ENCODE measurements at regions of chr6 and their contacts with region 1.

Region 1: DNA sequence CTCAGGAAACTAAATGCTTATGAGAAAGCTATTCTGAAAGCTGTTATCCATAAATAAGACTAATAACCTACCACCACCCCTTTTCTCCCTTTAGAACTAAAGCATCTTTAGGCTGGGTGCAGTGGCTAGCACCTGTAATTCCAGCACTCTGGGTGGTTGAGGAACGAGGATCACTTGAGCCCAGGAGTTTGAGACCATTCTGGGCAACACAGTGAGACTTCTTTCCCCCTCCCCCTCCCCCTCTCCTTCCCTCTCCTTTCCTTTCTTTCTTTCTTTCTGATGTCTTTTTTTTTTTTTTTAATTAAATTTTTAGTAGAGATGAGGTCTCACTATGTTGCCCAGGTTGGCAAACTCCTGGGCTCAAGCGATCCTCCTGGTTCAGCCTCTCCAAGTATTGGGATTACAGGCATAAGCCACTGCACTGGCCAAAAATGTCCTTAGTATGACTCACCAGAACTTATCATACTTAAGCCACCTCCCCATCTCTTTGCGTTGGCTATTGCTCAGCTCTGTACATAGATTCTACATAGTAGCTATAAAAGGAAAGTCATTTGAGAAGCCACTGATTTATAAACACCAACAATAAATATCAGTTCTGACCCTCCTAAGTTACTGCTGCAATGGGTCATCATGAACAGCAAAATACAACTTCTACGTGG is 54.8 kb upstream of the SPDEF start:
- DNase-seq: peak; percentile 64
- H3K4me3 ChIP-seq: no peak overlapping the region
- H3K27ac ChIP-seq: no peak overlapping the region
- H3K4me1 ChIP-seq: peaks cover 3% of the 10 kb centered on the region
- H3K27me3 ChIP-seq: no peaks in the 10 kb centered on the region
- CTCF ChIP-seq: no peak

Region 2: GRCh38 chr6:34161857-34162515 is 449.0 kb before region 1 on chr6:
- CTCF ChIA-PET with region 1: no interaction called
- dilution Hi-C with region 1: no loop called
- in situ Hi-C with region 1: loop called in 1 of 2 experiments (anchors 25 kb)
- intact Hi-C with region 1: loop called (anchors 1 kb)
- DNase-seq: no peak
- H3K4me3 ChIP-seq: no peak overlapping the region
- H3K27ac ChIP-seq: no peak overlapping the region
- H3K4me1 ChIP-seq: no peaks in the 10 kb centered on the region
- H3K27me3 ChIP-seq: no peaks in the 10 kb centered on the region
- CTCF ChIP-seq: no peak

Region 3: DNA sequence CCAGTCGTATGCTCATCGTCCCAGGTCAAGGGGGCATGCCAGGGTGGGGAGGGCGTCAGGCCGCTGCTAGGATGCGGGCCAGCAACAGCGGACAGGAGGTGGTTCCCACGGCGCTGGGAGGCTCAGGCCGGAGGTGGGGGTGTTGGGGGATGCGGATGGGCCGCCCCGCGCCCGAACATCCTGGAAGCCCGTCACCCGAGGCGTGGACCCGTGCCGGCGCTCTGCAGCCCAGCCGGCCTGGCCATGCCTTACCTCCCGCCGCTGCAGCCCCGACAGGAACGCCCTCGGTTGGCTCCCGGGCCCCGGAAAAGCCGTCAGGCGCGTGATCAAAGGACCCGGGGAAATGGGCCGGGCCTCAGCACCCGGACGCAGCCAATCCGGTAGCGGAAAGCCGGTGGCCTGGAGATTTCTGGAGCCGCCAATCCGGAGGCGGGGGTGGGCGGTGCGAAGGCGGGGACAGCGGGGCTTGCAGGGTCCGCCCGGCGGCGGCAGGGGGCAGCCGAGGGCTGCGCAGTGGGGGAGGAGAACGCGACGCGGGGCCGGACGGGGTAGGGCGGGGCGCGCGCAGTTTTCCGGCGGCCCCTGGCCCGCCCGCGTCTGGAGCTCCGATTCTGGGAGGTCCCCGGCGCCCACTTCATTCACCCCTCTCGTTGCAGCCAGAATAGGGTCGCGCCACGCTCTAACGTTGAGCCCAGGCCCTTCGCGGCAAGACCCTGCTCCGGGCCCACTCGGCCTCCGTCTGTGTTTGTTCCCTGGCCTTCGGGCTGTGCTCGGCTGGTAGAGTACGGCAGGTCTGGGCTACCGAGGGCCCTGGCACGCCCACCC is 362.0 kb before region 1 on chr6 and contains the start of gene SMIM29:
- CTCF ChIA-PET with region 1: no interaction called
- dilution Hi-C with region 1: no loop called
- in situ Hi-C with region 1: no loop called
- intact Hi-C with region 1: loop called (anchors 1 kb)
- DNase-seq: peak; percentile 94
- H3K4me3 ChIP-seq: peak within 1 kb of the TSS; percentile 83 to 95 (median 84)
- H3K27ac ChIP-seq: peak within 1 kb of the TSS; percentile 48
- H3K4me1 ChIP-seq: peaks cover 47% of the 10 kb centered on the region
- H3K27me3 ChIP-seq: no peaks in the 10 kb centered on the region
- CTCF ChIP-seq: peak; percentile 38 to 87
- total RNA-seq, gene SMIM29: 20.3 to 40.6 TPM

Region 4: DNA sequence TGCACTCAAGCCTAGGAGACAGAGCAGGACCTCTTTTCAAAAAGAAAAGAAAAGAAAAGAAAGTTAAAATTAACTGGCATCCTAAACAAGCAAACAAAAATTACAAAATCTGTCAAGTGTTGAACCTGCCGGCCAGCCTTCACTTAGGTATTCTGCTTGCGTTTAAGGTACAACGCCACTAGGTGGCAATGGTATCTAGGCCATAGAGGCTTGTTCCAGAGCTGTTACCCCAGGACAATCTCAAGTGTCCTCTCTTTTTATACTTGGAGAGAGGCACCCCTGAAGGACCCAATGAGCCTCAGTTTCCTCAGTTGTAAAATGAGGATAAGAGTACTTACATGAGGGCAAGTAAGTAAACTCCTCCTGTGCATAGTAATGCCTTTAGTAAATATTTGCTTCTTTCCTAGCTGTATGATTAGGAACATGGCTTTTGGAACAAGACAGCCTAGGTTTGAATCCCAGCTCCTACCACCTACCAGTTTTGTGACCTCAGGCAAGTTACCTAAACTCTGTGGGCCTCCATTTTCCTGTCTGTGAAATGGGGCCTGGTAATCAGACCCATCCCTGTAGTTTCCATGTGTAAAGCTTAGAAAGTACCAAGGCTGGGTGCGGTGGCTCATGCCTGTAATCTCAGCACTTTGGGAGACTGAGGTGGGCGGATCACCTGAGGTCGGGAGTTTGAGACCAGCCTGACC is 150.9 kb before region 1 on chr6:
- CTCF ChIA-PET with region 1: interaction called, 19 read pairs
- dilution Hi-C with region 1: no loop called
- in situ Hi-C with region 1: loop called in 1 of 2 experiments (anchors 10 kb)
- intact Hi-C with region 1: loop called (anchors 1 kb)
- DNase-seq: peak; percentile 49
- H3K4me3 ChIP-seq: no peak overlapping the region
- H3K27ac ChIP-seq: no peak overlapping the region
- H3K4me1 ChIP-seq: peaks cover 6% of the 10 kb centered on the region
- H3K27me3 ChIP-seq: no peaks in the 10 kb centered on the region
- CTCF ChIP-seq: peak; percentile 69 to 84

Region 5: GRCh38 chr6:34696739-34697543 is 86.0 kb after region 1 on chr6 and contains the start of gene ILRUN:
- CTCF ChIA-PET with region 1: interaction called, 4 read pairs
- dilution Hi-C with region 1: no loop called
- in situ Hi-C with region 1: no loop called
- intact Hi-C with region 1: loop called (anchors 2 kb)
- DNase-seq: peak; percentile 93
- H3K4me3 ChIP-seq: peak within 1 kb of the TSS; percentile 87 to 97 (median 91)
- H3K27ac ChIP-seq: peak within 1 kb of the TSS; percentile 80
- H3K4me1 ChIP-seq: peaks cover 17% of the 10 kb centered on the region
- H3K27me3 ChIP-seq: no peaks in the 10 kb centered on the region
- CTCF ChIP-seq: no peak
- total RNA-seq, gene ILRUN: 40.0 to 67.3 TPM